ENCODE measurements at regions of chr3 and their contacts with region 1.

Region 1: GRCh38 chr3:9396700-9397521 is 504 bp upstream of the SETD5 start:
- DNase-seq: peak; percentile 99
- ATAC-seq: peak; percentile 71
- H3K4me3 Mint-ChIP-seq: peak overlapping the region; percentile 98
- H3K27ac Mint-ChIP-seq: peak overlapping the region; percentile 100
- H3K4me1 Mint-ChIP-seq: peaks cover 61% of the 10 kb centered on the region
- H3K27me3 Mint-ChIP-seq: no peaks in the 10 kb centered on the region
- CTCF ChIP-seq: no peak

Region 2: DNA sequence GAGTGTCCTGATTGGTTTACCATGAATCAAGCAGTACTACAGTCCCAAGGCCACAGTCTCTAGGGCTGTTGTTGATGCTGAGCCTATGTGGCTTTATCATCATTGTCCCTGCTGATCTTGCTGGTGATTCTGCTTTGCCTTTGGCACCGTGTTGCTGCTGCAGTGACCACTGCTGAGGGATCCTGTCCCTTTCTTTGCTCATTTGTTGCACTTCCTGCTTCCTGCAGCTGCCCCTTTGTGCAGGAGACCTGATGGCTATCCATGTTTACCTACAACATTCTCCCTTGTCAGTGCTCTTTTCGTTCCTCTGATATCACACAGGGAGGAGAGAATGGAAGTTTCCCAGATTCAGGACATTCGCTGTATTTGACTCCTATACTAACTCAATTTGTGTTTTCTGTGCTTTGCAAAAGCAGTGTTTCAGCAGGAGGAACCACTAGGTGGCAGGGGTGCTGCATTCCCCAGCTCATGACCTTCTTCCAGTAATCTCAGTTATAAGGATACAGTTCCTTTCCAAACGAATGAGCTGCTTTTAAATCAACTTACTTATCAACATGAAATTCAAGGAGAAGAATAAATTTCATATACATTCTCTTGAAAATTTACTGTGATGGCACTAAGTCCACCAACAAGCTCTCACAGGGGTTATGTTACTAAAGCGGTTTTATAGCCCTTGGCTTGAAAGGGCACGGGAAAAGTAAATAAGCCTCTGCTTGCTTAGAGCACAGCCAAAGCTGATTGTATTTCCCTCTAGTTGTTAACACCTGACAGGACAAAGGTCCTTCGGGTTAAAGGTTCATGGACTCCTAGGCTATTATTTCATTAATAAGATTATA is 43.8 kb before region 1 on chr3:
- CTCF ChIA-PET with region 1: interaction called, 8 read pairs
- POLR2A ChIA-PET with region 1: interaction called, 6 read pairs
- intact Hi-C with region 1: loop called (anchors 2 kb)
- DNase-seq: peak; percentile 19
- ATAC-seq: peak; percentile 53
- H3K4me3 Mint-ChIP-seq: no peak overlapping the region
- H3K27ac Mint-ChIP-seq: no peak overlapping the region
- H3K4me1 Mint-ChIP-seq: peaks cover 28% of the 10 kb centered on the region
- H3K27me3 Mint-ChIP-seq: no peaks in the 10 kb centered on the region
- CTCF ChIP-seq: peak; percentile 47

Region 3: DNA sequence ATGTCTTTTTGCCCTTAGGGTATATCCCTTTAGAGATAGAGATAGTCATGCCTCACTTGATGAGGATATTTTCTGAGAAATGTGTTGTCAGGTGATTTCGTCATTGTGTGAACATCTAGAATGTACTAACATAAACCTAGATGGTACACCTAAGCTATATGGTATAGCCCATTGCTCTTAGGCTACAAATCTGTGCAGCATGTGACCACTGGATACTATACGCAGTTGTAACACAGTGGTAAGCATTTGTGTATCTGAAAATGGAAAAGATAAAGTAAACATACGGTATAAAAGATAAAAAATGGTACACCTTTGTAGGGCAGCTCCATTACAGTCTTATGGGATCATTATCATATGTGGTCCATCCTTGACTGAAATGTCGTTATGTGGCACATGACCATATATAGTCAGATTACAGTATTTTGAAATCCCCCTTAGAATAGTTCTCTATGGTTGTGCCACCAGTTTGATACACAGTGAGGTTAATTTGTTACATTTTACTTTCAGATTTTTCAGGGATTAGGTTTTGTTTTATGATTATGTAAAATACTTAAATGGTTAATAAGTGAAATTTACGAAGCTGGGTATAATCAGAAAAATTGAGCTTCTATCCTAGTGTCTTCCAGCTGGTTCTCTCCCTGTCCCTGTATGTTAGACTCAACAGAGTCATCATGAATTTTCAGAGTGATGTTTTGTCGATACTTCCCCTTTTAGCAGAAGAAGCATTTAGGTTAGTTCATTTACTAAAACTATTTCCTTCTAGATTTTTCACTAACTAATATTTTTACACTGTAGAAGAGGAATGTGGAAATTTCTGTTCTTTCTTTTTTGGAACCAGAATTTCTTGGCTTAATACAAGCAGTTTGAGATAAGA is 13.3 kb after region 1 on chr3:
- CTCF ChIA-PET with region 1: interaction called, 6 read pairs
- POLR2A ChIA-PET with region 1: interaction called, 26 read pairs
- intact Hi-C with region 1: loop called (anchors 1 kb)
- DNase-seq: no peak
- ATAC-seq: peak; percentile 64
- H3K4me3 Mint-ChIP-seq: no peak overlapping the region
- H3K27ac Mint-ChIP-seq: peak overlapping the region; percentile 19
- H3K4me1 Mint-ChIP-seq: peaks cover 77% of the 10 kb centered on the region
- H3K27me3 Mint-ChIP-seq: no peaks in the 10 kb centered on the region
- CTCF ChIP-seq: no peak

Region 4: DNA sequence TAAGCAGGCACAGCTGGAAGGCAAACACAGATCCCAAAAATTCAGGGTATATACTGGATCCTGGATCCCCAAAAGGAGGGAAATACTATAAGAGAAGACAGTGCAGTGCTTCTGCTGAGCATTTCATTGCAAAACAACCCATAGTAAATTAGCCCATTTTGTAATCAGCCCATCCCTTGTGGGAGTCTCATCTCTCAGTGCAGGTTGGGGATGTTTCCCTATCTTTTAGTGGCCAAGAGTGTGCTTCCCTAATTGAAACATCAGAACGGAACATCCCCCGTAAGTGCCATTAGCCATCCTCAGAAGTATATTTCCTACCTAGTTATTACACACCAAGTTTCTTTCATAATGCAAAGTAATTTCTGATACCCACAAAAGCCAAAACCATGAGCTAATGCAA is 241.2 kb after region 1 on chr3:
- CTCF ChIA-PET with region 1: no interaction called
- POLR2A ChIA-PET with region 1: no interaction called
- intact Hi-C with region 1: no loop called
- DNase-seq: no peak
- ATAC-seq: no peak
- H3K4me3 Mint-ChIP-seq: no peak overlapping the region
- H3K27ac Mint-ChIP-seq: no peak overlapping the region
- H3K4me1 Mint-ChIP-seq: peaks cover 11% of the 10 kb centered on the region
- H3K27me3 Mint-ChIP-seq: peaks cover 2% of the 10 kb centered on the region
- CTCF ChIP-seq: no peak

Region 5: GRCh38 chr3:9649791-9650521 is 253.0 kb after region 1 on chr3:
- CTCF ChIA-PET with region 1: no interaction called
- POLR2A ChIA-PET with region 1: interaction called, 16 read pairs
- intact Hi-C with region 1: loop called (anchors 1 kb)
- DNase-seq: peak; percentile 25
- ATAC-seq: peak; percentile 59
- H3K4me3 Mint-ChIP-seq: peak overlapping the region; percentile 94
- H3K27ac Mint-ChIP-seq: peak overlapping the region; percentile 84
- H3K4me1 Mint-ChIP-seq: peaks cover 54% of the 10 kb centered on the region
- H3K27me3 Mint-ChIP-seq: no peaks in the 10 kb centered on the region
- CTCF ChIP-seq: no peak

Region 6: DNA sequence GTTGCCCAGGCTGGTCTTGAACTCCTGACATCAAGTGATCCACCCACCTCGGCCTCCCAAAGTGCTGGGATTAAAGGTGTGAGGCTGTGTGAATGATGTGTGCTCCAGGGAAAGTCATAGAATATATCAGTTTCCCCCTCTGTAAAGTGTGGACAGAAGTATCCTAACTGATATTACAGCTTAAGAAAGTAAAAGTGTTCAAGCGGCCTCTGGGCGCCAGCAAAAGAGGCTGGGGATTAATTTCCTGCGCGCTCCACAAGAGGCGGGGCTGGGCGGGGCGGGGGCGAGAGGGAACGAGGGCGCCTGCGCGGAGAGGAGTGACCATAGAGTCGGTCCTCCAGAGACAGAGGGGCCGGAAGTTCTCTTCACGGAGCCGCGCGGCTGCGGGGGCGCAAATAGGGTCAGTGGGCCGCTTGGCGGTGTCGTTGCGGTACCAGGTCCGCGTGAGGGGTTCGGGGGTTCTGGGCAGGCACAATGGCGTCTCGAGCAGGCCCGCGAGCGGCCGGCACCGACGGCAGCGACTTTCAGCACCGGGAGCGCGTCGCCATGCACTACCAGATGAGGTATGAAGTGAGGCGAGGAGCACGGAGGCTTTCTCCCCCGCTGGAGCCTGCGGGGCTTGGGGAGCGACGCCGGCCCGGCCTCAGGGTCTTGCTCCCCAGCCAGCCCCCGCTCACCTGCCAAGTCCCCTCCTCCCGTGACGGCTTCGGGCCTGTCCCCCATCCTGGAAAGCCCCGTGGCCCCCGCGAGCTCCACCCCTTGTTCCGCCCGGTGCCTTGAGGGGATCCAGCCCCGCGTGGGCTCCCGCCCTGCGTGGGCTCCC is 493.5 kb after region 1 on chr3 and contains the start of gene JAGN1:
- CTCF ChIA-PET with region 1: no interaction called
- POLR2A ChIA-PET with region 1: no interaction called
- intact Hi-C with region 1: loop called (anchors 2 kb)
- DNase-seq: peak; percentile 85
- ATAC-seq: peak; percentile 86
- H3K4me3 Mint-ChIP-seq: peak within 1 kb of the TSS; percentile 94
- H3K27ac Mint-ChIP-seq: peak within 1 kb of the TSS; percentile 97
- H3K4me1 Mint-ChIP-seq: peaks cover 44% of the 10 kb centered on the region
- H3K27me3 Mint-ChIP-seq: no peaks in the 10 kb centered on the region
- CTCF ChIP-seq: no peak
- total RNA-seq, gene JAGN1: 30.9 and 32.1 TPM in 2 replicates

Measured in activated B cell treated with CpG ODN at 0.5 μM for 24 hours (primary cell).